Vagina (tissue), 2 donors: ENCODE measurements at regions of chr1 and their contacts with region 1.

Region 1: DNA sequence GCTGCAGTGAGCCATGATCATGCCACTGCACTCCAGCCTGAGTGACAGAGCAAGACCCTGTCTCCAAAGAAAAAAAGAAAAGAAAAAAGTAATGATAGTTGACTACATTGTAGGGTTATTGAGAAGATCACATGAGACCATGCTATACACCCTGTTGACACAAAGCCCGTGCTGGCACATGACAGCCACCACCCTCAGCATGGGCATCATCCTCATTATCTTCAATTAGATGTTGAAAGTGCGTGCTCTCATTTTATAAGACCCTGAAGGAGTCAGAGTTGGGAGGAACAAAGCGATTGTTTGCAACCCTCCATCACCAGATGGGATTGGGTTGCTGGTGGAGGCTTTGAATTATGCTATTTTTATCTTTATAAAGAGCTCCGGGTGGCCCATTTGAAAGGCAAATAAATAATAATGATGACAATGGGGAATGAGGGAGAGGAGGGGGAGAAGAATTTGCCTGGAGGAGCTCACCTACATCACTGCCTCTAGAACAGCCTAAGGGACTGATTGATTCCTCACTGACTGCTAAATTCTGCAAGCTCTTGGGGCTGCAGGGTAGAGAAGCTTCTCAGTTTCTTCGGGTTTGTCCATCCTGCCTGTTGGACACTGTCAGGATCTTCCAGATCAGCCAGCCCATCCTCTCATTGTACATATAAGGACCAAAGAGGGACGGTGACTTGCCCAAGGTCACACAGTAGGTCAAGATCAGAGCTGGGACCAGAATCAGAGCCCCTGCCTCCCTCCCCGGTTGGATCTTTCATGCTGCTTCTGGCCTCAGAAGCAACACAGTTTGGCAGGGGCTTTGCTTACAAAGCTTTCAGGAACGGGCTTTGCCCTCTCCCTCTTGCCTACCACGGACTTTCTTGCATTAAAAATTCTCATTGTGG is 131.0 kb upstream of the ZBTB40 start:
- DNase-seq: peak in 1 of 2 donors; percentile 64
- H3K4me3 ChIP-seq: no peak overlapping the region
- H3K27ac ChIP-seq: no peak overlapping the region
- H3K4me1 ChIP-seq: no peaks in the 10 kb centered on the region
- H3K27me3 ChIP-seq: no peaks in the 10 kb centered on the region
- CTCF ChIP-seq: no peak
- POLR2A ChIP-seq: no peak

Region 2: GRCh38 chr1:22364764-22365163 is 44.1 kb after region 1 on chr1:
- intact Hi-C with region 1: no loop called
- DNase-seq: no peak
- H3K4me3 ChIP-seq: no peak overlapping the region
- H3K27ac ChIP-seq: no peak overlapping the region
- H3K4me1 ChIP-seq: no peaks in the 10 kb centered on the region
- H3K27me3 ChIP-seq: no peaks in the 10 kb centered on the region
- CTCF ChIP-seq: no peak
- POLR2A ChIP-seq: no peak

Region 3: GRCh38 chr1:22814176-22815042 is 493.7 kb after region 1 on chr1:
- intact Hi-C with region 1: loop called (anchors 5 kb)
- DNase-seq: no peak
- H3K4me3 ChIP-seq: no peak overlapping the region
- H3K27ac ChIP-seq: peak overlapping the region; percentile 54
- H3K4me1 ChIP-seq: peaks cover 28% of the 10 kb centered on the region
- H3K27me3 ChIP-seq: no peaks in the 10 kb centered on the region
- CTCF ChIP-seq: no peak
- POLR2A ChIP-seq: no peak